ENCODE measurements at regions of chr2 and their contacts with region 1.

Region 1: GRCh38 chr2:96536445-96537065 is at the start of gene ARID5A:
- DNase-seq: peak; percentile 85 to 93 (median 87)
- H3K4me3 ChIP-seq: peak within 1 kb of the TSS; percentile 81 to 97
- H3K4me3 Mint-ChIP-seq: peak within 1 kb of the TSS; percentile 91 to 98 (median 96)
- H3K27ac ChIP-seq: peak within 1 kb of the TSS; percentile 94
- H3K27ac Mint-ChIP-seq: peak within 1 kb of the TSS; percentile 96 to 100 (median 99)
- H3K4me1 ChIP-seq: peaks cover 52% of the 10 kb centered on the region
- H3K4me1 Mint-ChIP-seq: peaks cover 26 to 65% (median 41%) of the 10 kb centered on the region in 4 donors
- H3K27me3 ChIP-seq: no peaks in the 10 kb centered on the region
- H3K27me3 Mint-ChIP-seq: no peaks in the 10 kb centered on the region
- total RNA-seq, gene ARID5A: 80.0 to 83.8 TPM

Region 2: GRCh38 chr2:96145036-96145847 is 391.3 kb before region 1 on chr2 and contains the start of gene DUSP2:
- CTCF ChIA-PET with region 1: no interaction called
- POLR2A ChIA-PET with region 1: interaction called, 25 read pairs
- intact Hi-C with region 1: loop called (anchors 5 kb)
- DNase-seq: peak; percentile 86 to 92 (median 87)
- H3K4me3 ChIP-seq: peak within 1 kb of the TSS; percentile 71 to 86
- H3K4me3 Mint-ChIP-seq: peak within 1 kb of the TSS; percentile 93 to 96 (median 94)
- H3K27ac ChIP-seq: peak within 1 kb of the TSS; percentile 100
- H3K27ac Mint-ChIP-seq: peak within 1 kb of the TSS; percentile 98 to 100 (median 99)
- H3K4me1 ChIP-seq: peaks cover 62% of the 10 kb centered on the region
- H3K4me1 Mint-ChIP-seq: peaks cover 33 to 79% (median 57%) of the 10 kb centered on the region in 4 donors
- H3K27me3 ChIP-seq: no peaks in the 10 kb centered on the region
- H3K27me3 Mint-ChIP-seq: no peaks in the 10 kb centered on the region
- total RNA-seq, gene DUSP2: 33.4 to 34.6 TPM

Region 3: DNA sequence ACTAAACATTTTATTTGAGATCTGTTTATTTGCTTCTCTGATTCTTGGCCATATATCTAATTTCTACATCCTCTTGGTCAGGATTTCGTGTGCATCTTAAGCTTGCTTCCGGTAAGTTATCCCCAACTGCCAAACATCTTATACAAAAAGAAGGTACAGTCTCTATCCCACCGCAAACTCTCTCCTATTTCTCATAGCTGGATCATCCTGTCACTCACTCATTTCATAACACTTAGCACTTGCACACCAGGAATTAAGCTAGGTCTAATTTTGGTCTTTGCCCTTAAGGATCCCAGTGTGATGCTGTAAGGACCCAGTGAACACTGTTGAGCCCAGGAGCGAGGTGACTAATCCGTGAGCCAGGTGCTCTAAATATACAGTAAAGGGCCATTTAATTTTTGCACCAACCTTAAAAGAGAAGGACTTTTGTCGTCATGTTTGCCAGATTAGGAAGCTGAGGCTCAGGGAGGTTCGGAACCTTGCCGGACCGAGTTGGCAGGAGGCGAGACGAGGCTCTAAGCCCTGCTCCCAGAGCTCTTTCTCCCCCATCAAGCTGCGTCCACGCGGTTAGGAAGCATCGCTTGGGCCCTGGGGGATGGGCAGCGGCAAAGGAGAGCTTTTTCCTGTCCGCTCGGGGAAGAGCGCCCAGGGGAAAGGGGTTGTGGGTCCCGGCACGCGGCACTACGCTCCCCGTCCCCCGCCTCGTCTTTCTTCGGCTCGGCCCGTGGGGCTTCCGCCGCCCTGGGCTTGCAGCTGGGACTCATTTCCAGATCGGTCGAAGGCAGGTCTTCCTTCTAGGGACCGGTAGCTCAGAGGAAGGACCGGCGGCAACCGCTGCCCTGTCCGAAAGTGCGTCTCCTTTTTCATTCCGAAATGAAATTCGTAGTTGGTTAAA is 215.6 kb before region 1 on chr2:
- CTCF ChIA-PET with region 1: no interaction called
- POLR2A ChIA-PET with region 1: interaction called, 18 read pairs
- intact Hi-C with region 1: no loop called
- DNase-seq: peak in 2 of 5 donors; percentile 5 to 6
- H3K4me3 ChIP-seq: peak overlapping the region; percentile 76 to 77
- H3K4me3 Mint-ChIP-seq: peak overlapping the region; percentile 88 to 95 (median 92)
- H3K27ac ChIP-seq: peak overlapping the region; percentile 72
- H3K27ac Mint-ChIP-seq: peak overlapping the region; percentile 50 to 97 (median 89)
- H3K4me1 ChIP-seq: peaks cover 64% of the 10 kb centered on the region
- H3K4me1 Mint-ChIP-seq: peaks cover 37 to 75% (median 59%) of the 10 kb centered on the region in 4 donors
- H3K27me3 ChIP-seq: no peaks in the 10 kb centered on the region
- H3K27me3 Mint-ChIP-seq: no peaks in the 10 kb centered on the region

Region 4: DNA sequence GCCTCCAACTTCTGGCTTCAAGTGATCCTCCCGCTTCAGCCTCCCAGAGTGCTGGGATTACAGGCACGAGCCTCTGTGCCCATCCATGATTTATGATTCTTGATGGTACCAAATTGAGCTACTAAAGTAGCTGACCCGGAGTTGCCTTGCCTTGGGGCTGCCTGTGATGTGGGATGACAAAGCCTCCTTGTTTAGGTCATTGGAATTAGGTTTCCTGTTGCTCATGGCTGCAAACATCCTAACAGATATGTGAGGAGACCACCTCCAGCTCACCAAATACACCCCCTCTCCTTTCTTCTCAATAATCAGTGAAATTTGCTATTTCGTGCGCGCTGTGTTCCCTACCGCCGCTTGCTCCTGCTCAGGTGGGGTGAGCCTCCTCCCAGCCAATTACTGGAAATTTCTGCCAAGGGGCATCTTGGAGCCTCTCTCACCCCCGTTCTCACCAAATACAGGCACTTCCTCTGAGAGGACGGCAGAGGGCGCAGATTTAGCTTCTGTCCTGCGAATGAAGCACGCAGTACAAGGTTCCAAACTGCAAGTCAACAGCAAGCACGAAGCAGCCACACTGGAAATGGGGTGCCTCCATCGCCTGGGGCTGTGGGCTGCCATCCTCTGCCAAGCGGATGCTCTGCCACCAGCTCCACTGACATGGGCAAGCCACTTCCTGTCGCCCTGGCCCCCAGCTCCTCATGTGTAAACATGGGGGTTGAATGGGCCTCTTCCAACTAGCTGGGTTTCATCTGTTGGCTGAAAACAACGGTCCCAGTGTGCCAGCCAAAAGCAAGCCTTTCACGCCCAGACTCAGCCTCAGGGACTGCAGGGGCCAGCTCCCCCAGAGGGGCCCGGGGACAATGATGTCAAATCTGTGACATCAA is 129.3 kb before region 1 on chr2:
- CTCF ChIA-PET with region 1: interaction called, 16 read pairs
- POLR2A ChIA-PET with region 1: interaction called, 36 read pairs
- intact Hi-C with region 1: loop called (anchors 1 kb)
- DNase-seq: peak; percentile 86 to 89 (median 88)
- H3K4me3 ChIP-seq: peak overlapping the region; percentile 14 to 21
- H3K4me3 Mint-ChIP-seq: peak overlapping the region; percentile 64 to 91 (median 86)
- H3K27ac ChIP-seq: peak overlapping the region; percentile 39
- H3K27ac Mint-ChIP-seq: peak overlapping the region; percentile 81 to 99 (median 97)
- H3K4me1 ChIP-seq: peaks cover 34% of the 10 kb centered on the region
- H3K4me1 Mint-ChIP-seq: peaks cover 22 to 39% (median 32%) of the 10 kb centered on the region in 4 donors
- H3K27me3 ChIP-seq: no peaks in the 10 kb centered on the region
- H3K27me3 Mint-ChIP-seq: no peaks in the 10 kb centered on the region

Region 5: DNA sequence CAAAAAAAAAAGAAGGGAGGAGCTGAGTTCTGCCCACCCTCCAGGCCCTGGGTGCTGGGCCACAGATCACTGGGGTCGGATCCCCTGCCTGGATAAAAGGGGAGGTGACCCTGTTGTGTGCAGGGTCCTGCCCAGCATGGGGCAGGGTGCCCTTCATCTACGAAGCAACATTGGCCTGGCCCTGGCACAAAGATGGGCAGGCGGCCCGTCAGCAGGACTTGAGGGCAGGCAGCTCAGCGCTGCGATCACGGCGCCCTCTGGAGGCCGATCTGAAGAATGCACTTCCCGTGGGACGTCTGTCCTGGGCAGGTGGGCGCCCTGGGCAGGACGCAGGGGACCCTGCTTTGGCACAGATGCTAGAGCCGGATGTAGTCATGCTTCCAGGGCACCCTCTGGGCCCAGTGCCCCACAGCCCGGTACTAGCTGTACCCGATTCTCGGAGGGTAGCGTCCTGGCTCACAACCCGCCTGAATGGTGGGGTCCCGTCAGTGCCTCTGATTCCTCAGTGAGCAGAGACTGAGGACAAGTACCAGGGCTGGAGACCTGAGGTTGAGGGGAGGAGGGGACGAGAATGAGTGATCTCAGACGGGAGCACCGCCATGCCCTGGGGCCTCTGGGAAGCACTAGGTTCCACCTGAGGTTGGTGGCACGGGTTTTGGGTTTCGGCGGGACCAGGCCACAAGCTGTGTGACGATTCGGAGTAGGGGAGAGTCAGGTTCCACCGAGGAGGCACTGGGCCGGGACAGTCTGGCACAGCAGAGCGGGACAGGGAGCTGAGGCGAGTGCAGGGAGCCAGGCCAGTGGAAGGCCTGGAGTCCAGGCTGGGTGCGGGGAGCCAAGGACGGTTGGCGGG is 18.0 kb after region 1 on chr2:
- CTCF ChIA-PET with region 1: interaction called, 169 read pairs
- POLR2A ChIA-PET with region 1: interaction called, 320 read pairs
- intact Hi-C with region 1: loop called (anchors 1 kb)
- DNase-seq: peak; percentile 46 to 80 (median 69)
- H3K4me3 ChIP-seq: no peak overlapping the region
- H3K4me3 Mint-ChIP-seq: peak overlapping the region in 7 of 8 donors; percentile 15 to 69 (median 32)
- H3K27ac ChIP-seq: no peak overlapping the region
- H3K27ac Mint-ChIP-seq: peak overlapping the region in 4 of 7 donors; percentile 22 to 86 (median 82)
- H3K4me1 ChIP-seq: peaks cover 17% of the 10 kb centered on the region
- H3K4me1 Mint-ChIP-seq: peaks cover 1 to 32% (median 12%) of the 10 kb centered on the region in 4 donors
- H3K27me3 ChIP-seq: no peaks in the 10 kb centered on the region
- H3K27me3 Mint-ChIP-seq: no peaks in the 10 kb centered on the region

Region 6: GRCh38 chr2:96760036-96760985 is 223.8 kb after region 1 on chr2 and contains the start of gene CNNM4:
- CTCF ChIA-PET with region 1: interaction called, 3 read pairs
- POLR2A ChIA-PET with region 1: interaction called, 6 read pairs
- intact Hi-C with region 1: loop called (anchors 2 kb)
- DNase-seq: peak; percentile 89 to 93 (median 91)
- H3K4me3 ChIP-seq: peak within 1 kb of the TSS; percentile 67 to 89
- H3K4me3 Mint-ChIP-seq: peak within 1 kb of the TSS; percentile 85 to 92 (median 89)
- H3K27ac ChIP-seq: peak within 1 kb of the TSS; percentile 76
- H3K27ac Mint-ChIP-seq: peak within 1 kb of the TSS; percentile 81 to 93 (median 93)
- H3K4me1 ChIP-seq: peaks cover 56% of the 10 kb centered on the region
- H3K4me1 Mint-ChIP-seq: peaks cover 36 to 59% (median 48%) of the 10 kb centered on the region in 4 donors
- H3K27me3 ChIP-seq: no peaks in the 10 kb centered on the region
- H3K27me3 Mint-ChIP-seq: no peaks in the 10 kb centered on the region
- total RNA-seq, gene CNNM4: 6.7 to 7.2 TPM

Region 7: GRCh38 chr2:96868555-96869280 is 332.2 kb after region 1 on chr2:
- CTCF ChIA-PET with region 1: no interaction called
- POLR2A ChIA-PET with region 1: interaction called, 11 read pairs
- intact Hi-C with region 1: no loop called
- DNase-seq: peak; percentile 50 to 72 (median 52)
- H3K4me3 ChIP-seq: peak overlapping the region; percentile 47 to 72
- H3K4me3 Mint-ChIP-seq: peak overlapping the region; percentile 69 to 91 (median 88)
- H3K27ac ChIP-seq: peak overlapping the region; percentile 68
- H3K27ac Mint-ChIP-seq: peak overlapping the region in 6 of 7 donors; percentile 79 to 94 (median 92)
- H3K4me1 ChIP-seq: peaks cover 39% of the 10 kb centered on the region
- H3K4me1 Mint-ChIP-seq: peaks cover 27 to 58% (median 42%) of the 10 kb centered on the region in 4 donors
- H3K27me3 ChIP-seq: no peaks in the 10 kb centered on the region
- H3K27me3 Mint-ChIP-seq: no peaks in the 10 kb centered on the region

Measured in CD4-positive, alpha-beta memory T cell (primary cell).